HCT116 (cell line): ENCODE measurements at regions of chr2 and their contacts with region 1.

Region 1: GRCh38 chr2:223797811-223798721 is 39.3 kb downstream of the AP1S3 start:
- DNase-seq: no peak
- ATAC-seq: peak; percentile 42
- H3K4me3 ChIP-seq: no peak overlapping the region
- H3K27ac ChIP-seq: peak overlapping the region; percentile 79
- H3K4me1 ChIP-seq: peaks cover 87% of the 10 kb centered on the region in 2 experiments
- H3K27me3 ChIP-seq: no peaks in the 10 kb centered on the region
- CTCF ChIP-seq: peak; percentile 52 to 84 (median 83)
- POLR2A ChIP-seq: no peak
- RAD21 ChIP-seq: peak; percentile 93

Region 2: GRCh38 chr2:222969491-222969890 is 828.6 kb before region 1 on chr2:
- CTCF ChIA-PET with region 1: interaction called, 21 read pairs
- POLR2A ChIA-PET with region 1: no interaction called
- RAD21 ChIA-PET with region 1: no interaction called
- intact Hi-C with region 1: loop called (anchors 5 kb)
- DNase-seq: no peak
- ATAC-seq: no peak
- H3K4me3 ChIP-seq: no peak overlapping the region
- H3K27ac ChIP-seq: no peak overlapping the region
- H3K4me1 ChIP-seq: peaks cover 6 to 26% of the 10 kb centered on the region in 2 experiments; a peak in 2 of 4 replicates
- H3K27me3 ChIP-seq: no peaks in the 10 kb centered on the region
- CTCF ChIP-seq: no peak
- POLR2A ChIP-seq: no peak
- RAD21 ChIP-seq: no peak

Region 3: DNA sequence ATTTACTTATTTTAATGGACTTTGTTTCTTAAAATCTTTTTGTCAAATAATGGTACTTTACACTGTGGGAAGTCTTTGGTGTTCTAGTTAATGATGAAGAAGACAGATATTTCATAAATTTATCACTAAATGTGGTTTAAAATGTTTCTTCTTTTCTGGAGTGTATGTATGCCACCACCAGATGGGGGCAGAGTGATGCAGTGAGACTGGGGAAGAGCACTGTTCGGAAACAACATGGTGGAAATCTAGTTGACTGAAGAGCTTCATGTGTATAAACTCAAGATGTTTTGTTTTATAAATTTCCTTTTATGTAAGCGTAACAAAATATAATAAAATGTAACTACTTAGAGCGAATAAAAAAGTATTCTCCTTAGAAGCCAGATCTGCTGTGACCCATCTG is 550.9 kb before region 1 on chr2:
- CTCF ChIA-PET with region 1: interaction called, 14 read pairs
- POLR2A ChIA-PET with region 1: no interaction called
- RAD21 ChIA-PET with region 1: interaction called in 1 of 2 experiments, 3 read pairs
- intact Hi-C with region 1: loop called (anchors 2 kb)
- DNase-seq: peak; percentile 28
- ATAC-seq: peak; percentile 80
- H3K4me3 ChIP-seq: no peak overlapping the region
- H3K27ac ChIP-seq: no peak overlapping the region
- H3K4me1 ChIP-seq: no peaks in the 10 kb centered on the region
- H3K27me3 ChIP-seq: no peaks in the 10 kb centered on the region
- CTCF ChIP-seq: peak; percentile 58 to 81 (median 61); a peak in 5 of 6 replicates
- POLR2A ChIP-seq: no peak
- RAD21 ChIP-seq: peak; percentile 89

Region 4: GRCh38 chr2:223459328-223459939 is 338.6 kb before region 1 on chr2:
- CTCF ChIA-PET with region 1: interaction called, 3 read pairs
- POLR2A ChIA-PET with region 1: no interaction called
- RAD21 ChIA-PET with region 1: no interaction called
- intact Hi-C with region 1: loop called (anchors 2 kb)
- DNase-seq: peak; percentile 27
- ATAC-seq: peak; percentile 30; the same call in 1 of the 2 replicates
- H3K4me3 ChIP-seq: no peak overlapping the region
- H3K27ac ChIP-seq: peak overlapping the region; percentile 58; the same call in 1 of the 2 replicates
- H3K4me1 ChIP-seq: peaks cover 19 to 31% of the 10 kb centered on the region in 2 experiments
- H3K27me3 ChIP-seq: no peaks in the 10 kb centered on the region
- CTCF ChIP-seq: peak; percentile 30 to 54 (median 51); a peak in 4 of 6 replicates
- POLR2A ChIP-seq: no peak
- RAD21 ChIP-seq: peak; percentile 69

Region 5: GRCh38 chr2:223580951-223581350 is 217.1 kb before region 1 on chr2:
- CTCF ChIA-PET with region 1: no interaction called
- POLR2A ChIA-PET with region 1: no interaction called
- RAD21 ChIA-PET with region 1: no interaction called
- intact Hi-C with region 1: no loop called
- DNase-seq: no peak
- ATAC-seq: peak; percentile 37; the same call in 1 of the 2 replicates
- H3K4me3 ChIP-seq: 0 out of 4 replicates have a peak overlapping the region, but pooled peaks of 1 of the 2 experiments have one; percentile 2
- H3K27ac ChIP-seq: no peak overlapping the region
- H3K4me1 ChIP-seq: peaks cover 40 to 55% of the 10 kb centered on the region in 2 experiments
- H3K27me3 ChIP-seq: no peaks in the 10 kb centered on the region
- CTCF ChIP-seq: no peak
- POLR2A ChIP-seq: no peak
- RAD21 ChIP-seq: no peak

Region 6: GRCh38 chr2:223674998-223675609 is 123.0 kb before region 1 on chr2:
- CTCF ChIA-PET with region 1: interaction called, 10 read pairs
- POLR2A ChIA-PET with region 1: no interaction called
- RAD21 ChIA-PET with region 1: no interaction called
- intact Hi-C with region 1: loop called (anchors 1 kb)
- DNase-seq: peak; percentile 54
- ATAC-seq: peak; percentile 87
- H3K4me3 ChIP-seq: no peak overlapping the region; a peak in 1 of 4 replicates
- H3K27ac ChIP-seq: peak overlapping the region; percentile 56
- H3K4me1 ChIP-seq: peaks cover 21 to 45% of the 10 kb centered on the region in 2 experiments
- H3K27me3 ChIP-seq: no peaks in the 10 kb centered on the region
- CTCF ChIP-seq: peak; percentile 73 to 86 (median 81)
- POLR2A ChIP-seq: no peak
- RAD21 ChIP-seq: peak; percentile 82

Region 7: GRCh38 chr2:223727562-223727961 is 70.5 kb before region 1 on chr2:
- CTCF ChIA-PET with region 1: interaction called, 27 read pairs
- POLR2A ChIA-PET with region 1: interaction called, 5 read pairs
- RAD21 ChIA-PET with region 1: interaction called in 1 of 2 experiments, 3 read pairs
- intact Hi-C with region 1: loop called (anchors 1 kb)
- DNase-seq: peak; percentile 79
- ATAC-seq: peak; percentile 73
- H3K4me3 ChIP-seq: no peak overlapping the region
- H3K27ac ChIP-seq: peak overlapping the region; percentile 93
- H3K4me1 ChIP-seq: peaks cover 43 to 64% of the 10 kb centered on the region in 2 experiments
- H3K27me3 ChIP-seq: no peaks in the 10 kb centered on the region
- CTCF ChIP-seq: peak; percentile 63 to 76 (median 70); a peak in 5 of 6 replicates
- POLR2A ChIP-seq: no peak
- RAD21 ChIP-seq: peak; percentile 86

Region 8: GRCh38 chr2:223779877-223780276 is 18.2 kb before region 1 on chr2:
- CTCF ChIA-PET with region 1: interaction called, 10 read pairs
- POLR2A ChIA-PET with region 1: no interaction called
- RAD21 ChIA-PET with region 1: interaction called, 3 read pairs
- intact Hi-C with region 1: no loop called
- DNase-seq: peak; percentile 60
- ATAC-seq: peak; percentile 76
- H3K4me3 ChIP-seq: no peak overlapping the region
- H3K27ac ChIP-seq: peak overlapping the region; percentile 33
- H3K4me1 ChIP-seq: peaks cover 36 to 57% of the 10 kb centered on the region in 2 experiments
- H3K27me3 ChIP-seq: no peaks in the 10 kb centered on the region
- CTCF ChIP-seq: peak; percentile 26 to 56 (median 36); a peak in 5 of 6 replicates
- POLR2A ChIP-seq: no peak
- RAD21 ChIP-seq: peak; percentile 56

Region 9: GRCh38 chr2:224628416-224628815 is 830.4 kb after region 1 on chr2:
- CTCF ChIA-PET with region 1: no interaction called
- POLR2A ChIA-PET with region 1: no interaction called
- RAD21 ChIA-PET with region 1: no interaction called
- intact Hi-C with region 1: no loop called
- DNase-seq: no peak
- ATAC-seq: no peak
- H3K4me3 ChIP-seq: no peak overlapping the region
- H3K27ac ChIP-seq: no peak overlapping the region
- H3K4me1 ChIP-seq: no peaks in the 10 kb centered on the region
- H3K27me3 ChIP-seq: no peaks in the 10 kb centered on the region
- CTCF ChIP-seq: no peak
- POLR2A ChIP-seq: no peak
- RAD21 ChIP-seq: no peak